Activated CD4-positive, alpha-beta memory T cell treated with anti-CD3 and anti-CD28 coated beads for 36 hours (primary cell): ENCODE measurements at regions of chr11 and their contacts with region 1.

Region 1: DNA sequence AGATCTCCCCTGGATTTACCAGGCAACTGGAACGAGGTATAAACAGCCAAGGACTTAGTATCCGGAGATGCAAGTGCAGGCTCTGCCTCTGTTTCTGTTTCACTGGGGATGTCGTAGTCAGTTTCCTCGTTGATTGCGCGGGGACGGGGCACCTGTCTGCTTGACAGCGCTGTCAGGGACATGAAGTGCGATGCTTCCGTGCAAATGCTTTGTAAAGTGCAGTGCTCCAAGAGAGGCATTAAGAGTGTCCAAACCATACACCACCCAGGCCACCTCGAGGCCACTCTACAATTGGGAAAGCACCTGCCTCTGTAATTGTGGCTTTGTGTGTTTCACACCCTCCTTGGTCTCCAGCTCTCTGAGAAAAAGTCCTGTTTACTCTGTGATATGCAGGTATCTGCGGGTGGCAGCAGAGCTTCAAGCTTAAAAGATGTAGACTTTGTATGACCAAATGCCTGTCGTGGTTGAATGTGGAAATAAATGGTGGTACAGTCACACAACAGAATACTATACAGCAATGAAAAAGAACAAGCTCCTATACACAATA is 18.6 kb upstream of the CD5 start:
- DNase-seq: peak; percentile 84
- H3K4me3 Mint-ChIP-seq: peak overlapping the region; percentile 85
- H3K27ac Mint-ChIP-seq: peak overlapping the region; percentile 92
- H3K4me1 Mint-ChIP-seq: peaks cover 58% of the 10 kb centered on the region
- H3K27me3 Mint-ChIP-seq: no peaks in the 10 kb centered on the region

Region 2: DNA sequence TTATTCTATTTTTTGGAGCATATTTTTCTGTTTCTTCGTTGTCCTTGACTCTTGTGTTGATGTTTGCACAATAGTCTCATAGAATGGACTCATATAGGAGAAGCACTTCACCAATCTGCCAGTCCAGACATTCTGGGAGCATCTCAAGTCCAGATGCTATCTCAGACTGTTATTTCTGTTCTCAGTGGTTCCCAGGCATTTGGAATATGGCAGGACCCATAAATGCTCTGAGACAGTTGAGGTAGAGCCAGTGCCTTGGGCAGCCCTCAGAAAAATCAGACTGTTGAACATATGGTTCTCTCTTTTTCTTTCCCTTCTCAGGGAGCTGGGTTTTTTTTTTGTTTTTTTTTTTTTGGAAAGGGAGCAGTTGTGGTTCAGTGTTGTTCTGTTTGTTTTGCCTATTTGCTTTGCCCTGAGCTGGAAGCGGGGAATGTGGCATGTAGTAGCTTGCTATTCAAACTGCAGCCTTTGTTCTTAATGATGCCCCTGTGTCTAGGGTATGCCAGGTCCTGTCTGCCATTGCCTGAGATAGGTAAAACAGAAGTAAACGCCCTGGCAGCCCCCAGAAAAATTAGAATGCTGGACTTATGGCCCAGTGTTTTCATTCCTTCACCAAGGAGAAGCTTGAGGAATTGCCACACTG is 998.9 kb before region 1 on chr11:
- CTCF ChIA-PET with region 1: no interaction called
- POLR2A ChIA-PET with region 1: no interaction called
- intact Hi-C with region 1: no loop called
- DNase-seq: no peak
- H3K4me3 Mint-ChIP-seq: no peak overlapping the region
- H3K27ac Mint-ChIP-seq: no peak overlapping the region
- H3K4me1 Mint-ChIP-seq: no peaks in the 10 kb centered on the region
- H3K27me3 Mint-ChIP-seq: peaks cover 33% of the 10 kb centered on the region

Region 3: GRCh38 chr11:60985991-60986915 is 97.4 kb before region 1 on chr11:
- CTCF ChIA-PET with region 1: no interaction called
- POLR2A ChIA-PET with region 1: interaction called, 27 read pairs
- intact Hi-C with region 1: no loop called
- DNase-seq: peak; percentile 97
- H3K4me3 Mint-ChIP-seq: peak overlapping the region; percentile 84
- H3K27ac Mint-ChIP-seq: peak overlapping the region; percentile 99
- H3K4me1 Mint-ChIP-seq: peaks cover 91% of the 10 kb centered on the region
- H3K27me3 Mint-ChIP-seq: no peaks in the 10 kb centered on the region

Region 4: DNA sequence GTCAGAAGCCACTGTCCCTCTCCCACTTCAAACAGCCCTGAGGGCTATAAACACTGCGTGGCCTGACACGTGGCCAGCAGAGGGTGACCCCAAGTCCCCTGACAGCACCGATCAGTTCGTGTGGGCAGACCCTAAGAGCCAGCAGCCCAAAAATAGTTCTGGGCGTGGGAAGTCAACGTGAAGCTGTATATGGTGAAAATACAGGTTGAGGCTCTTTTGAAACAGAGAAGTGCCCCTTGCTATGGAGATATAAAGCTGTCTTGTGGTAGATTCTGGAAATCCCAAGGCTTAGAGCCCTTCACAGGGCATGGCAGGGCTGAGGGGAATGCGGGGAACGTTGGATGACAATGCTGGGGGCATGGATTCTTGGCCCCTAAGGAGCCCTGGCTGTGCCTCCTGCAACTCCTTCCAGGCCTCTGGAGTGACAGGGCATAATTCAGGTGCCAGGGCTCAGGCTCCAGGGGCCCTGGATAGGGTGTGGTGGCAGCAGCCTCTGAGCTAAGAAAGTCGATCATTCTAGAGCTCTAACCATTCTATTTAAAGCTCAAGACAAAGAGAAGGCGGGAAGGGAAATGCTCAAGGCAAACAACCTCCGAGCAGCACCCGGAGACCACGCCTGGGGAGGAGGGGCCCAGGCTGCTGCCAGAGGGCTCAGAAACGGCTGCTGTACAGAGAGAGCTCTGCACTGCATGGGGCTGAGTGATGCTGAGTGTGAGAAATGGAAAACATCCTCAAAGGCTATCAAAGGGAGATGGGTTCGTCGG is 41.7 kb before region 1 on chr11:
- CTCF ChIA-PET with region 1: interaction called, 4 read pairs
- POLR2A ChIA-PET with region 1: interaction called, 18 read pairs
- intact Hi-C with region 1: no loop called
- DNase-seq: peak; percentile 92
- H3K4me3 Mint-ChIP-seq: peak overlapping the region; percentile 68
- H3K27ac Mint-ChIP-seq: peak overlapping the region; percentile 96
- H3K4me1 Mint-ChIP-seq: peaks cover 71% of the 10 kb centered on the region
- H3K27me3 Mint-ChIP-seq: no peaks in the 10 kb centered on the region

Region 5: GRCh38 chr11:61071208-61071681 is 12.4 kb before region 1 on chr11:
- CTCF ChIA-PET with region 1: interaction called, 6 read pairs
- POLR2A ChIA-PET with region 1: interaction called, 157 read pairs
- intact Hi-C with region 1: no loop called
- DNase-seq: peak; percentile 80
- H3K4me3 Mint-ChIP-seq: peak overlapping the region; percentile 62
- H3K27ac Mint-ChIP-seq: peak overlapping the region; percentile 94
- H3K4me1 Mint-ChIP-seq: peaks cover 89% of the 10 kb centered on the region
- H3K27me3 Mint-ChIP-seq: no peaks in the 10 kb centered on the region

Region 6: GRCh38 chr11:61129639-61130523 is 46.2 kb after region 1 on chr11:
- CTCF ChIA-PET with region 1: interaction called, 10 read pairs
- POLR2A ChIA-PET with region 1: interaction called, 5 read pairs
- intact Hi-C with region 1: loop called (anchors 2 kb)
- DNase-seq: peak; percentile 95
- H3K4me3 Mint-ChIP-seq: peak overlapping the region; percentile 17
- H3K27ac Mint-ChIP-seq: peak overlapping the region; percentile 57
- H3K4me1 Mint-ChIP-seq: peaks cover 25% of the 10 kb centered on the region
- H3K27me3 Mint-ChIP-seq: no peaks in the 10 kb centered on the region

Region 7: DNA sequence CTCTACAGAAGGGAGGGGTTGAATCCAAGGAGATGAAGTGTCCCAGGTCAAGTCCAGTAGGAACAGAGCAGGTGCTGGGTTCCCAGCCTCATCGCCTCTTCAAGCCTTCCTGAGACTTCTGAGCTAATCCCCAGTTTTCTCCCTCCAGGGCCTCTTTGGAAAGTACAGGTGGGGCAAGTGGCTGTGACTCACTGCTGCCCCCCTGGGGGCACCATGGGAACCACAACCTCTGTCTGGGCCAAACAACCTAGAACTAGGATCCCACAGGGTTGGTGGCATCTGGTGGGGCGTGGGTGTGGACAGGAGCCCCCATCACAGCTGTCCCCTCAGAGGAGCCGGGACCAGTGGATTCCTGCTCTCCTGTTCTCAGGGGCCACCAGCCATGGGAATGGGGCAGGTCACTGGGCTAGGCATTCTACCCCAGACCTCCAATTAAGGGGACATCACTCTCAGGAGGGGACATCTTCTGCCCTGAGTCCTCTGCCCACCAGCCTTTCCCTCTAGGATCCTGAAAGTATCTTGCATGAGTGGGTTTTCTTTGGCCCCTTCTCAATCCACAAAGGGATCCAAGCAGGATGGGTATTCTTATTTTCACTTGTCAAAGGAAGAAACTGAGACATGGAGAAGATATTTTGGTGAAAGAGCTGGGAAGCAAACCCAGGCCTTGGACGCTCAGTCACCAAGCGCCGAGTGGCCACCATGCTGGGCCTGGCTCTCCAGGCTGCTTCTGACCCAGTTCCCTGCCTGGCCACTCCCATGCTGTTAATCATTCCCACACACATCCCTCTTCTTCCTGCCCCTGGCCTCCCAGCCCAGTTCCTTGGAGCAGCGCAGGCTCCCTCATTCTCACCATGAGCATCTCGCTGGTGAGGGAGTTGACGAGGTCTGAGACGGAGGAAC is 448.7 kb after region 1 on chr11:
- CTCF ChIA-PET with region 1: no interaction called
- POLR2A ChIA-PET with region 1: no interaction called
- intact Hi-C with region 1: no loop called
- DNase-seq: peak; percentile 57
- H3K4me3 Mint-ChIP-seq: no peak overlapping the region
- H3K27ac Mint-ChIP-seq: no peak overlapping the region
- H3K4me1 Mint-ChIP-seq: no peaks in the 10 kb centered on the region
- H3K27me3 Mint-ChIP-seq: peaks cover 15% of the 10 kb centered on the region